CD4-positive, alpha-beta memory T cell (primary cell): ENCODE measurements at regions of chr22 and their contacts with region 1.

Region 1: GRCh38 chr22:36369922-36370791 is 17.6 kb downstream of the MYH9 start:
- DNase-seq: peak in 1 of 5 donors; percentile 65
- H3K4me3 ChIP-seq: peak overlapping the region in 1 of 2 donors; percentile 32
- H3K4me3 Mint-ChIP-seq: peak overlapping the region; percentile 84 to 93 (median 88)
- H3K27ac ChIP-seq: peak overlapping the region; percentile 91
- H3K27ac Mint-ChIP-seq: peak overlapping the region; percentile 92 to 99 (median 98)
- H3K4me1 ChIP-seq: peaks cover 100% of the 10 kb centered on the region
- H3K4me1 Mint-ChIP-seq: peaks cover 74 to 100% (median 87%) of the 10 kb centered on the region in 4 donors
- H3K27me3 ChIP-seq: no peaks in the 10 kb centered on the region
- H3K27me3 Mint-ChIP-seq: no peaks in the 10 kb centered on the region

Region 2: DNA sequence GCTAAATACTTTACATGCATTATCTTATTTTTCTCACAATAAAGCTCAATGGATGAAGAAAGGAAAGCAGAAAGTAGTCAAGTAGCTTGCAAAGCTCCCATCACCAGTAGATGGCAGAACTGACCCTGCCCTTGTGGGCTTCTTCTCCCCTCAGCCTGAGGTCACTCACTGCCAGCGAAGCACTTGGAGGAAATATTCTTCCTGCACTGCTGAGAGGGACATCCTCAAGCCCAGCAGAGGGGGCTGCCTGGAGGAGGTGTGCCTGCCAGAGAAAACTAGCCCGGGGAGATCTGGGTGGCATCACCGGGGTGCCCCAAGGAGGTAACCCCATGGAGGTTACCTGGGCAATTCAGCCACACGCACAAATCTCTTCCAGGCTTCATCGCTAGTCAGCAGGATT is 175.2 kb before region 1 on chr22:
- CTCF ChIA-PET with region 1: no interaction called
- POLR2A ChIA-PET with region 1: no interaction called
- intact Hi-C with region 1: no loop called
- DNase-seq: peak in 4 of 5 donors; percentile 28 to 32 (median 30)
- H3K4me3 ChIP-seq: no peak overlapping the region
- H3K4me3 Mint-ChIP-seq: no peak overlapping the region
- H3K27ac ChIP-seq: no peak overlapping the region
- H3K27ac Mint-ChIP-seq: no peak overlapping the region
- H3K4me1 ChIP-seq: no peaks in the 10 kb centered on the region
- H3K4me1 Mint-ChIP-seq: peaks cover 2 to 22% (median 6%) of the 10 kb centered on the region in 4 donors
- H3K27me3 ChIP-seq: no peaks in the 10 kb centered on the region
- H3K27me3 Mint-ChIP-seq: peaks cover 4 to 8% of the 10 kb centered on the region in 2 donors

Region 3: GRCh38 chr22:36284171-36284581 is 86.0 kb before region 1 on chr22:
- CTCF ChIA-PET with region 1: no interaction called
- POLR2A ChIA-PET with region 1: no interaction called
- intact Hi-C with region 1: no loop called
- DNase-seq: no peak
- H3K4me3 ChIP-seq: no peak overlapping the region
- H3K4me3 Mint-ChIP-seq: no peak overlapping the region
- H3K27ac ChIP-seq: no peak overlapping the region
- H3K27ac Mint-ChIP-seq: peak overlapping the region in 2 of 7 donors; percentile 21 to 72
- H3K4me1 ChIP-seq: peaks cover 33% of the 10 kb centered on the region
- H3K4me1 Mint-ChIP-seq: peaks cover 14 to 31% (median 21%) of the 10 kb centered on the region in 4 donors
- H3K27me3 ChIP-seq: no peaks in the 10 kb centered on the region
- H3K27me3 Mint-ChIP-seq: no peaks in the 10 kb centered on the region

Region 4: GRCh38 chr22:36359181-36359996 is 10.8 kb before region 1 on chr22:
- CTCF ChIA-PET with region 1: interaction called, 11 read pairs
- POLR2A ChIA-PET with region 1: interaction called, 2,535 read pairs
- intact Hi-C with region 1: loop called (anchors 1 kb)
- DNase-seq: peak in 1 of 5 donors; percentile 63
- H3K4me3 ChIP-seq: no peak overlapping the region
- H3K4me3 Mint-ChIP-seq: peak overlapping the region; percentile 35 to 89 (median 76)
- H3K27ac ChIP-seq: peak overlapping the region; percentile 55
- H3K27ac Mint-ChIP-seq: peak overlapping the region; percentile 91 to 98 (median 95)
- H3K4me1 ChIP-seq: peaks cover 100% of the 10 kb centered on the region
- H3K4me1 Mint-ChIP-seq: peaks cover 79 to 99% (median 91%) of the 10 kb centered on the region in 4 donors
- H3K27me3 ChIP-seq: no peaks in the 10 kb centered on the region
- H3K27me3 Mint-ChIP-seq: no peaks in the 10 kb centered on the region

Region 5: GRCh38 chr22:36606114-36606513 is 236.0 kb after region 1 on chr22:
- CTCF ChIA-PET with region 1: no interaction called
- POLR2A ChIA-PET with region 1: no interaction called
- intact Hi-C with region 1: no loop called
- DNase-seq: no peak
- H3K4me3 ChIP-seq: no peak overlapping the region
- H3K4me3 Mint-ChIP-seq: no peak overlapping the region
- H3K27ac ChIP-seq: no peak overlapping the region
- H3K27ac Mint-ChIP-seq: no peak overlapping the region
- H3K4me1 ChIP-seq: no peaks in the 10 kb centered on the region
- H3K4me1 Mint-ChIP-seq: no peaks in the 10 kb centered on the region
- H3K27me3 ChIP-seq: peaks cover 7% of the 10 kb centered on the region
- H3K27me3 Mint-ChIP-seq: peaks cover 34 to 50% of the 10 kb centered on the region in 2 donors

Region 6: GRCh38 chr22:36767035-36767775 is 397.0 kb after region 1 on chr22:
- CTCF ChIA-PET with region 1: no interaction called
- POLR2A ChIA-PET with region 1: no interaction called
- intact Hi-C with region 1: no loop called
- DNase-seq: no peak
- H3K4me3 ChIP-seq: no peak overlapping the region
- H3K4me3 Mint-ChIP-seq: no peak overlapping the region
- H3K27ac ChIP-seq: no peak overlapping the region
- H3K27ac Mint-ChIP-seq: peak overlapping the region in 1 of 7 donors; percentile 72
- H3K4me1 ChIP-seq: no peaks in the 10 kb centered on the region
- H3K4me1 Mint-ChIP-seq: peaks cover 0 to 7% (median 3%) of the 10 kb centered on the region in 4 donors
- H3K27me3 ChIP-seq: no peaks in the 10 kb centered on the region
- H3K27me3 Mint-ChIP-seq: no peaks in the 10 kb centered on the region